ENCODE measurements at regions of chr17 and their contacts with region 1.

Region 1: DNA sequence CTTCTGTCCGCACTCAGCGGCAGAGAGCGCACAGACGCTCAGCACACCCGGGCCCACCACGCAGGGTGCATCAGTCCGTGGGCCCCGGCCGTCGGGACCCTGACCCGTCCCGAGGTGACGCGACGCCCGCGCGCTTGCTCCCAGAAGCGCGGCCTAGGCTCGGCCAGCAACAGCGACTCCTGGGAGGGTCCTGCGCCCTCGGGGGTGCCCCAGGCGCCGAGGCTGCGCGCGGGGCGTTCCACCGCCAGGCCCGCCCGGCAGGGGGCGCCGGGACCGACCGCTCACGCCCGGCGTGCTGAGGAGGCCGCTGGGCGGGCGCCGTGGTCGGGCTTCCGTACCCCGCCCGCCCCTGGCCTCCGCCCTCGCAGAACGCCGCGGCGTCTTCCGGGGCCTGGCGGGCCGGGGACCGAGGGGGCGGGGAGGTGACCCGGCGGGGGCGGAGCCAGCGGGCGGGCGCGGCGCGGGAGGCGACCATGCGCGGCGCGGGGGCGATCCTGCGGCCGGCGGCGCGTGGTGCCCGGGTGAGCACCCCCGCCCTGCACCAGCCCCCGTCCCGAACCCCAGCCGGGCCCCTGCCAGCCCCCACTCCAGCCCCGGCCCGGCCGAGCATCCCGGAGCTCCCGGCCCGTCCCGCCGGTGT is at the start of gene CISD3:
- DNase-seq: peak; percentile 91
- ATAC-seq: peak; percentile 83
- total RNA-seq, gene CISD3: 17.3 TPM

Region 2: DNA sequence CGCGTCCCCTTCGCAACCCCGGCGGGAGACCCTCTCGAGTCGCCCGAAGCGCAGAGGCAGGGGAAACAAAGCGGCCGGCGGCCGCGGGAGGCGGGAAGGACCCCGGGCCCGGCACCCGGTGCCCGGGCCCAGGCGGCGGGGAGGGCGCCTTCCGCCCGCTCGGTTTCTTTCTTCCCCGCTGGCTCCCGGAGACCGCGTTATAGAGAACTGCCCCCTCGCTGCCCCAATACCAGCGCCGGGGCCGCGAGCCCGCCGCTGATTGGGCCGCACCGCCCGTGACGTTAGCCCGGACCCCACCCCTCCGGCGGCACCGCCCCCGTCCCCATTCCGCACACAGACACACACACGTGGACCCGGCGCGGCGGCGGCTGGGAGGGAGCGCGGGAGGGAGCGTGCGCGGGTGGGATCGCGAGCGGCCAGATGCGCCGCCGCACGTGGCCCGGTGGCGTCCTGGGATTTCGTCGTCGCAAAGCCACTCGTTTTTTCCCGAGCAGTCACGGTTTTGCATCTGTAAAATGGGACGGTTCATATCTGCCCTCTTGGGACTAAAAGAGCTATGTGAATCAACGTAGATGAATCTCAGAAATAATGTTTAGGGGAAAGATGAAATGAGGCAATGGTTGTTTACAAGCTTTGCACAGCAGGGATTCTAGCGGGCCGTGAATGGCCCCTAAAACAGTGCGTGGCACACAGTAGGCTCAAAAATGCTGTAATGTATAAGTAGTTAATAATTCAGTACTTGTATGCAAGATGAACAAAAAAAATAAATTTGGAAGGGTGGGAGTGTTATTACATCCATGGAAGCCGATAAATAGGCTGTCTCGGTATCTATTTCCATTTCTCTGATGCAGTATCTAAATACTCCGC is 55.0 kb before region 1 on chr17 and contains the start of gene EPOP:
- intact Hi-C with region 1: loop called (anchors 5 kb)
- DNase-seq: peak; percentile 89
- ATAC-seq: peak; percentile 88
- total RNA-seq, gene EPOP: 1.5 TPM

Region 3: DNA sequence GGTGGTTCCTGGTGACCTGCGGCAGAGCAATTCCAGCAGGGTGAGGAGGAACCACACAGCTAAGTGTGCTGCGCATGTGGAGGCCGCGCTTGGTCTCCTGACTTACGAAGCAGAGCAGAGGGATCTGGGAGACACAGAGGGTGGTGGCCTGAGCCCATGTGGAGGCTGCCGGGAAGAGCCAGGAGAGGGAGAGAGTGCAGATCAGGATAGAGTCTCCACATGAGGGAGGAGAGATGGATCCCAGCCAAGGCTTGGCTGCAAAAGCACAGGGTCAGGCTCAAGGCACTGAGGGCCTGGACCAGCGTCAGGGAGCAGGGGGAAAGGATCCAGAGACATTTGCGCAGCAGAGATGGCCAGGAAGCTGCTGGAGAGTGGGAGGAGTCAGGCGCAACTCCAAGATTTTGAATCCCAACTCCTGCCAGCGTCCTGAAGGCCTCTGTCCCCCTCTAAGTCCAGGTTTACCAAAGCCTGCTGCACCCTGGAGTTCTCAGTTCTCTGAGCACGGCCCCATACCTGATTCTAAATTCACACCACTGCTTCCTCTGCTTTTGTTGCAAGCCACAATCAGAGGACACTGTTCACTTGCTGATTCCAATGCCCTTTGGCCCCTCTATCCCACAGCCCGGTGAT is 36.2 kb before region 1 on chr17:
- intact Hi-C with region 1: no loop called
- DNase-seq: peak; percentile 93
- ATAC-seq: peak; percentile 98